CD14-positive monocyte (primary cell): ENCODE measurements at regions of chrX and their contacts with region 1.

Region 1: GRCh38 chrX:153953342-153953830 is 8.9 kb upstream of the RENBP start:
- DNase-seq: peak; percentile 49 to 61 (median 60)
- H3K4me3 ChIP-seq: no peak overlapping the region
- H3K4me3 Mint-ChIP-seq: no peak overlapping the region
- H3K27ac ChIP-seq: no peak overlapping the region
- H3K27ac Mint-ChIP-seq: peak overlapping the region in 1 of 7 donors; percentile 41
- H3K4me1 ChIP-seq: peaks cover 0 to 6% of the 10 kb centered on the region in 2 donors
- H3K4me1 Mint-ChIP-seq: peaks cover 1% of the 10 kb centered on the region
- H3K27me3 ChIP-seq: no peaks in the 10 kb centered on the region
- H3K27me3 Mint-ChIP-seq: peaks cover 0 to 6% (median 0%) of the 10 kb centered on the region in 3 donors
- CTCF ChIP-seq: peak; percentile 87

Region 2: DNA sequence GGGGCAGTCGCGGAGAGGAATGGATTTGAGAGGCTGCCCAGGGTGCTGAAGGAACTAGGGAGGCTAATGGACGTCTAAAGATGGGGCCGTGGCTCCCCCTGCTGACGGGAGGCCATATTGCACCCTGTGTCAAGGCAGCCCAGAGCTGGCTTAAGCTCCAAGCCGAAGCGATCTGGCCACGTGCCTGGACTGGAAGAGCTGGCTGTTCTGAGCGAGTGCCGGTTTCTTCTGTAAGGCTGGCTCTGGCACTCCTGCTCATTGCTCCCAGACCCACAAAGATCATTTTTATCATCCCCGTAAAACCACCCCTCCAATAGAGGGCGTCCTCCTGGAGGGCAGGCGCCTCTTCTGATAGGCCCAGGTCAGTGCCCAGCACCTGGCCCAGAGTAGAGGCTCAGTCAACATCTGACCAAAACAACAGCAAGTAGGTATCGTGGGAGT is 285.4 kb before region 1 on chrX:
- intact Hi-C with region 1: no loop called
- DNase-seq: peak; percentile 52 to 59 (median 56)
- H3K4me3 ChIP-seq: no peak overlapping the region
- H3K4me3 Mint-ChIP-seq: peak overlapping the region; percentile 65 to 78
- H3K27ac ChIP-seq: no peak overlapping the region
- H3K27ac Mint-ChIP-seq: no peak overlapping the region
- H3K4me1 ChIP-seq: no peaks in the 10 kb centered on the region
- H3K4me1 Mint-ChIP-seq: peaks cover 5% of the 10 kb centered on the region
- H3K27me3 ChIP-seq: peaks cover 3 to 14% of the 10 kb centered on the region in 2 donors
- H3K27me3 Mint-ChIP-seq: peaks cover 13 to 45% (median 40%) of the 10 kb centered on the region in 3 donors
- CTCF ChIP-seq: peak; percentile 71

Region 3: GRCh38 chrX:153763989-153764755 is 189.2 kb before region 1 on chrX and contains the start of gene PLXNB3:
- intact Hi-C with region 1: loop called (anchors 5 to 10 kb)
- DNase-seq: peak; percentile 52 to 66 (median 59)
- H3K4me3 ChIP-seq: no peak within 1 kb of the TSS
- H3K4me3 Mint-ChIP-seq: no peak within 1 kb of the TSS
- H3K27ac ChIP-seq: no peak within 1 kb of the TSS
- H3K27ac Mint-ChIP-seq: no peak within 1 kb of the TSS
- H3K4me1 ChIP-seq: peaks cover 0 to 5% of the 10 kb centered on the region in 2 donors
- H3K4me1 Mint-ChIP-seq: peaks cover 14% of the 10 kb centered on the region
- H3K27me3 ChIP-seq: no peaks in the 10 kb centered on the region
- H3K27me3 Mint-ChIP-seq: peaks cover 1 to 23% (median 16%) of the 10 kb centered on the region in 3 donors
- CTCF ChIP-seq: peak; percentile 72
- polyA plus RNA-seq, gene PLXNB3: not detected

Region 4: DNA sequence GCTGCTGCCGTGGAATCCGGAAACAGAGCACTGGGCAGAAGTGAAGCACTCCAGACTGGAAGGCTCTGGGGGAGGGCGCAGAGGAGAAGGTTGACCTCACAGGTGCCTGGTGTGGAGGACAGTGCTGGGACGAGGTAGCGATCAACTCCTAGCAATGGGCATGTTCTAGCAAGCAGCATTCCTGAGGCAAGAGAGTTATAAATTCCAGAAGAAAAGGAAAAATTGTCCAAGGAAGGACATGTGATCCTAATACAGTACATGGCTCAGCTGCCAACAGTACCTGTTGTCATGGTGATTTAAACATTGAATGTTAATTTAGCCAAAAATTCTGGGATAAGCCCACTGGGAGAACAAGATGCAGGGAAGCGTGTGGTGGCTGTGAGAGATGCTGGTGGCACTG is 35.5 kb before region 1 on chrX:
- intact Hi-C with region 1: loop called in 1 of 2 experiments (anchors 5 kb)
- DNase-seq: no peak
- H3K4me3 ChIP-seq: no peak overlapping the region
- H3K4me3 Mint-ChIP-seq: no peak overlapping the region
- H3K27ac ChIP-seq: no peak overlapping the region
- H3K27ac Mint-ChIP-seq: peak overlapping the region in 2 of 7 donors; percentile 32 to 66
- H3K4me1 ChIP-seq: peaks cover 10 to 14% of the 10 kb centered on the region in 2 donors
- H3K4me1 Mint-ChIP-seq: peaks cover 11% of the 10 kb centered on the region
- H3K27me3 ChIP-seq: no peaks in the 10 kb centered on the region
- H3K27me3 Mint-ChIP-seq: peaks cover 0 to 58% (median 0%) of the 10 kb centered on the region in 3 donors
- CTCF ChIP-seq: no peak